ENCODE measurements at regions of chr18 and their contacts with region 1.

Region 1: GRCh38 chr18:63311118-63312018 is 8.2 kb downstream of the BCL2 start:
- DNase-seq: peak; percentile 46
- ATAC-seq: peak; percentile 73
- H3K4me3 Mint-ChIP-seq: peak overlapping the region; percentile 77
- H3K27ac Mint-ChIP-seq: peak overlapping the region; percentile 96
- H3K4me1 Mint-ChIP-seq: peaks cover 94% of the 10 kb centered on the region
- H3K27me3 Mint-ChIP-seq: no peaks in the 10 kb centered on the region
- CTCF ChIP-seq: no peak

Region 2: GRCh38 chr18:63131106-63131958 is 180.0 kb before region 1 on chr18:
- CTCF ChIA-PET with region 1: interaction called, 12 read pairs
- POLR2A ChIA-PET with region 1: interaction called, 6 read pairs
- intact Hi-C with region 1: no loop called
- DNase-seq: no peak
- ATAC-seq: peak; percentile 65
- H3K4me3 Mint-ChIP-seq: no peak overlapping the region
- H3K27ac Mint-ChIP-seq: peak overlapping the region; percentile 70
- H3K4me1 Mint-ChIP-seq: peaks cover 35% of the 10 kb centered on the region
- H3K27me3 Mint-ChIP-seq: no peaks in the 10 kb centered on the region
- CTCF ChIP-seq: no peak

Region 3: GRCh38 chr18:63138436-63139340 is 172.7 kb before region 1 on chr18:
- CTCF ChIA-PET with region 1: interaction called, 4 read pairs
- POLR2A ChIA-PET with region 1: interaction called, 18 read pairs
- intact Hi-C with region 1: no loop called
- DNase-seq: no peak
- ATAC-seq: peak; percentile 47
- H3K4me3 Mint-ChIP-seq: peak overlapping the region; percentile 82
- H3K27ac Mint-ChIP-seq: peak overlapping the region; percentile 90
- H3K4me1 Mint-ChIP-seq: peaks cover 86% of the 10 kb centered on the region
- H3K27me3 Mint-ChIP-seq: no peaks in the 10 kb centered on the region
- CTCF ChIP-seq: no peak

Region 4: DNA sequence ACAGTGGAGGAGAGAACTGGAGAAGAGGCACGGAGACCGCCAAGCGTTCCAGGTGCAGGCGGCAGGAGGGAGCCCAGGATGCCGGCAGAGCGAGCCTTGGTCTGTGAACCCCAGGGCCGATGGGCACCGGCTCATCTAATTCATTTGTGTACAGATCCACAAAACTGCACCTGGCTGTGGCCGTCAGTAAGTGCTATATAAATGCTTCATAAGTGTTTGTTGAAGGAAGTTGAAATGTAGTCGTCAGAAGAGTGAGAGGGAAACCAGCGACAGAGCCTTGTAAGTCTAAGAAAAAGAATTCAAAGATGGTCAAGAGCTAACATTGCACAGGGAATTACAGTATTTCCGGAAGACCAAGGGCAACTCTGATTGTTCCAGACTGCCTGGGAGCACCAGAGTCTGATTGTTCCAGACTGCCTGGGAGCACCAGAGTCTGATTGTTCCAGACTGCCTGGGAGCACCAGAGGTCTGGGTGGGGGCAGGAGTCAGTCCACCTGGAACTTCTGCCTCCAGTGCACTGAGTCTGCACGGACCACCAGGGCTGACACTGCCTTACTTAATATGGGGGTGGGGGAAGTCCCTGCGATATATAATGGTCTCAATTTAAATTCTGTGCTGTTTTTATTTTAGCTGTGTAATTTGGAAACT is 104.1 kb before region 1 on chr18:
- CTCF ChIA-PET with region 1: no interaction called
- POLR2A ChIA-PET with region 1: interaction called, 3 read pairs
- intact Hi-C with region 1: loop called (anchors 2 kb)
- DNase-seq: no peak
- ATAC-seq: peak; percentile 60
- H3K4me3 Mint-ChIP-seq: peak overlapping the region; percentile 67
- H3K27ac Mint-ChIP-seq: peak overlapping the region; percentile 82
- H3K4me1 Mint-ChIP-seq: peaks cover 80% of the 10 kb centered on the region
- H3K27me3 Mint-ChIP-seq: no peaks in the 10 kb centered on the region
- CTCF ChIP-seq: no peak

Region 5: GRCh38 chr18:63292831-63293683 is 18.3 kb before region 1 on chr18:
- CTCF ChIA-PET with region 1: interaction called, 6 read pairs
- POLR2A ChIA-PET with region 1: interaction called, 90 read pairs
- intact Hi-C with region 1: loop called (anchors 1 kb)
- DNase-seq: peak; percentile 46
- ATAC-seq: peak; percentile 80
- H3K4me3 Mint-ChIP-seq: peak overlapping the region; percentile 64
- H3K27ac Mint-ChIP-seq: no peak overlapping the region
- H3K4me1 Mint-ChIP-seq: peaks cover 21% of the 10 kb centered on the region
- H3K27me3 Mint-ChIP-seq: no peaks in the 10 kb centered on the region
- CTCF ChIP-seq: no peak

Region 6: GRCh38 chr18:63859781-63860475 is 548.6 kb after region 1 on chr18:
- CTCF ChIA-PET with region 1: no interaction called
- POLR2A ChIA-PET with region 1: no interaction called
- intact Hi-C with region 1: no loop called
- DNase-seq: no peak
- ATAC-seq: no peak
- H3K4me3 Mint-ChIP-seq: no peak overlapping the region
- H3K27ac Mint-ChIP-seq: no peak overlapping the region
- H3K4me1 Mint-ChIP-seq: no peaks in the 10 kb centered on the region
- H3K27me3 Mint-ChIP-seq: peaks cover 21% of the 10 kb centered on the region
- CTCF ChIP-seq: no peak